ENCODE measurements at regions of chrX and their contacts with region 1.

Region 1: DNA sequence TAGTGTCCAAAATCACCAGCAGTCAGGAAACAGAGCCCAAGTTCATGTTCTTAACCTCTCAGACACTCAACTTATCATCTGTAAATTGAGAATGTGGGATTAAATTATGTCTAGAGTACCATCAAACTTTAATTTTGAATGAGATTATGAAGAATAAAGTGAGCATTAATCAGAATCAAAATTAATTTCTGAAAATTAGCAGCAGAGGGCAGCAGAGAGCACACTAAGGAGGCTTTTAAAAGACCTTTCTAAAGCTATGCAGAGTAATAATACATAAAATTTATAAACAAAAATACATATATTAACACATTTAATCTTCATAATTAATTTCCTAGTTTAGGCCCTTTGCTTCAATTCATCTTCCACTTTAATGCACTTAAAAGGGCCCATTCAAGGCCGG is 7.1 kb downstream of the TASL start:
- DNase-seq: no peak
- ATAC-seq: no peak
- H3K4me3 ChIP-seq: no peak overlapping the region
- H3K27ac ChIP-seq: no peak overlapping the region
- H3K4me1 ChIP-seq: no peaks in the 10 kb centered on the region
- H3K27me3 ChIP-seq: no peaks in the 10 kb centered on the region

Region 2: GRCh38 chrX:30388325-30388724 is 182.2 kb before region 1 on chrX:
- intact Hi-C with region 1: no loop called
- DNase-seq: no peak
- ATAC-seq: no peak
- H3K4me3 ChIP-seq: no peak overlapping the region
- H3K27ac ChIP-seq: no peak overlapping the region
- H3K4me1 ChIP-seq: no peaks in the 10 kb centered on the region
- H3K27me3 ChIP-seq: no peaks in the 10 kb centered on the region

Region 3: GRCh38 chrX:30713061-30713525 is 142.6 kb after region 1 on chrX:
- intact Hi-C with region 1: loop called in 2 of 4 experiments (anchors 5 to 10 kb)
- DNase-seq: peak; percentile 36 to 63 (median 50)
- ATAC-seq: peak in 1 of 2 donors; percentile 36
- H3K4me3 ChIP-seq: no peak overlapping the region
- H3K27ac ChIP-seq: no peak overlapping the region
- H3K4me1 ChIP-seq: no peaks in the 10 kb centered on the region
- H3K27me3 ChIP-seq: no peaks in the 10 kb centered on the region

Region 4: GRCh38 chrX:30795981-30796958 is 225.8 kb after region 1 on chrX:
- intact Hi-C with region 1: no loop called
- DNase-seq: no peak
- ATAC-seq: no peak
- H3K4me3 ChIP-seq: no peak overlapping the region
- H3K27ac ChIP-seq: no peak overlapping the region
- H3K4me1 ChIP-seq: no peaks in the 10 kb centered on the region
- H3K27me3 ChIP-seq: no peaks in the 10 kb centered on the region